ENCODE measurements at regions of chr22 and their contacts with region 1.

Region 1: DNA sequence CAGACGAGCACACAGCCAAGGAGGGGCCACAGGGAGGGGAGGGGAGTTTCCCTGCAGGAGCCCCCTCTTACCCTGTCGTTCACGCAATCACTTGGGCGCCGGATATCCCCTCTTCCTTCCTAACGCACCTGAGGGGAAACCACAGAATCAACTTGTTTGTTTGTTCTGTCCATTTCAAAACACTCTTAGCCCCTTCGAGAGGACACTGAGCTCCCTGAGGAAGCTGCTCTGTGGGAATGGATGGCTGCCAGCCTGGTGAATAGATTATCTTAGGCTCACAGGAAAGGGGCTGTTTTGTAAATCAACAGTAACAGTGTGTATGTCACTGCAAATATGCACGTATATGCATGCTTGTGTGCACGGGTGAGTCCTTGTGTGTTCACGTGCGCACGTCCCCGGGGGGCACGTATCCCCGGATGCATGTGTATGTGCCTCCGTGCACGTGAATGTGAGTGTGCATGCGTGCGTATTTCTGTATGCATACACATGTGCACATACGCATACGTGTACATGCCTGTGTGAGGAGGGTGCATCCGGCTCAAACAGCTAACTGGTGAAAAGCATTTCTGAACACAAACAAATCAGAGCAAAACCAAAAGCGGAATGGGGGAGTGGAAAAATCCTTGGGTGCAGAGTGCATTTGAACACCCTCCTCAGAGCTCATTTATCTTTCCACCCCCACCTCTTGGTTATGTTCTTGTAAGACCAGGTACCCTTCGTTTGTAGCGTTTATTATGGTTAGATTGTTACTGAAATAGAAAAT is 7.2 kb downstream of the ARSA start:
- DNase-seq: peak; percentile 80 to 97 (median 91)
- ATAC-seq: peak; percentile 72
- H3K4me3 ChIP-seq: peak overlapping the region; percentile 41 to 50
- H3K4me3 Mint-ChIP-seq: peak overlapping the region; percentile 82
- H3K27ac ChIP-seq: peak overlapping the region; percentile 91
- H3K27ac Mint-ChIP-seq: peak overlapping the region; percentile 100
- H3K4me1 ChIP-seq: peaks cover 28% of the 10 kb centered on the region
- H3K4me1 Mint-ChIP-seq: peaks cover 34% of the 10 kb centered on the region
- H3K27me3 ChIP-seq: no peaks in the 10 kb centered on the region
- H3K27me3 Mint-ChIP-seq: no peaks in the 10 kb centered on the region
- CTCF ChIP-seq: no peak

Region 2: DNA sequence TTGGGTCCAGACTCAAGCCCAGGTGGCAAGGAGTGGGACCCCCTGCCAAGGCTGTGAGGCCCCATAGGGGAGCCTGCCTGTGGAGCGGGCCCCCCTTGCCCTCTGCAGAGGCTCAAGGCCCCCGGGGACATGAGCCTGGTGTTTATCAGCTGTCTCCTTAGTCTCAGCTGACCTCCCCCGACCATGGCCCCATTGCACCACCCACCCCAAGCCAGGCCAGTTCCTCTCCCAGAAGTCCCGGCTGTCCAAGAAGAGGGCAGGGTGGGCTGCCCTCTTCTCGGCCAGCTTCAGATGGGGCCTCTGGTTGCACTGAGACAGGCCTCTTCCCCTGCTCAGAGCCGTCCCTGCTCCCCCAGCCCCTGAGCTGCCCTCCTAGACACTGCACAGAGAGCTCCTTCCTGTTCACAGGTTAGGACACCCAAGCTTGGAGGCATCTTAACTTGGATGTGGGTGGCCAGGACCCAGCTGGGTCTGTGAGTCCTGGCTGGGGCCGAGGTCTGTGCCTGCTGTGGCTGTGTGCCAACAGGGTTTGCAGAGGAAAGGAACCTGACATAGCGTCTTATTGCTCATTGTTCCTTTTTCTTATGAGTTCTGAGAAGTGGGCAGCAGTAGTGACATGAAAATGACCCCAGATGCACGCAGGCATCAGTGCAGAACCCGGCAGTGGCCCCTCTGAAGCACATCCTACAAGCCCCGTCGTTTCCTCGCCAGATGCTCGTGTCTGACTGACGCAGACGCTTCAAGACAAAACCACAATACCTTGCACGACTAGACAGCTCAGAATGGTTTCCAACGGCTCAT is 429.6 kb before region 1 on chr22:
- CTCF ChIA-PET with region 1: no interaction called
- POLR2A ChIA-PET with region 1: interaction called, 10 read pairs
- intact Hi-C with region 1: loop called in 1 of 2 experiments (anchors 1 kb)
- DNase-seq: peak; percentile 70 to 96 (median 81)
- ATAC-seq: peak; percentile 61
- H3K4me3 ChIP-seq: peak overlapping the region; percentile 81 to 94
- H3K4me3 Mint-ChIP-seq: peak overlapping the region; percentile 80
- H3K27ac ChIP-seq: peak overlapping the region; percentile 94 to 99
- H3K27ac Mint-ChIP-seq: peak overlapping the region; percentile 95
- H3K4me1 ChIP-seq: peaks cover 61% of the 10 kb centered on the region
- H3K4me1 Mint-ChIP-seq: peaks cover 47% of the 10 kb centered on the region
- H3K27me3 ChIP-seq: no peaks in the 10 kb centered on the region
- H3K27me3 Mint-ChIP-seq: no peaks in the 10 kb centered on the region
- CTCF ChIP-seq: no peak

Region 3: DNA sequence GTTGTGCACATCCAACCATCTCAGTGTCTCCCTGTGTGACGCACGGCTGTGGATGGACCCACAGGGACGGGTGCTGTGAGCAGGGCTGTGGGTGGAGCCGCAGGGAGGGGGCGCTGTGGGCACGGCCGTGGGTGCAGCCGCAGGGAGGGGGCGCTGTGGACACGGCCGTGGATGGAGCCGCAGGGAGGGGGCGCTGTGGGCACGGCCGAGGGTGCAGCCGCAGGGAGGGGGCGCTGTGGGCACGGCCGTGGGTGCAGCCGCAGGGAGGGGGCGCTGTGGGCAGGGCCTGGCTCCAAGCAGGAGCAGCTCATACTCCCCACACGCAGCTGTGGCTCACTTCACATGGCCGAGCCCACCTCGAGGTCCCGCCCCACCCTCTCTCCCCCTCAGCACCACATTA is 344.6 kb before region 1 on chr22:
- CTCF ChIA-PET with region 1: interaction called, 6 read pairs
- POLR2A ChIA-PET with region 1: interaction called, 3 read pairs
- intact Hi-C with region 1: loop called (anchors 2 to 5 kb)
- DNase-seq: peak in 4 of 9 experiments; percentile 41 to 81 (median 70)
- ATAC-seq: peak; percentile 74
- H3K4me3 ChIP-seq: no peak overlapping the region
- H3K4me3 Mint-ChIP-seq: no peak overlapping the region
- H3K27ac ChIP-seq: no peak overlapping the region
- H3K27ac Mint-ChIP-seq: no peak overlapping the region
- H3K4me1 ChIP-seq: peaks cover 10% of the 10 kb centered on the region
- H3K4me1 Mint-ChIP-seq: peaks cover 3% of the 10 kb centered on the region
- H3K27me3 ChIP-seq: no peaks in the 10 kb centered on the region
- H3K27me3 Mint-ChIP-seq: peaks cover 3% of the 10 kb centered on the region
- CTCF ChIP-seq: peak; percentile 41

Region 4: GRCh38 chr22:50474668-50475492 is 145.9 kb before region 1 on chr22 and contains the start of gene SBF1:
- CTCF ChIA-PET with region 1: interaction called, 4 read pairs
- POLR2A ChIA-PET with region 1: interaction called, 7 read pairs
- intact Hi-C with region 1: loop called (anchors 2 kb)
- DNase-seq: peak; percentile 78 to 94 (median 86)
- ATAC-seq: peak; percentile 65
- H3K4me3 ChIP-seq: peak within 1 kb of the TSS; percentile 63 to 82
- H3K4me3 Mint-ChIP-seq: peak within 1 kb of the TSS; percentile 94
- H3K27ac ChIP-seq: peak within 1 kb of the TSS; percentile 62 to 73
- H3K27ac Mint-ChIP-seq: peak within 1 kb of the TSS; percentile 96
- H3K4me1 ChIP-seq: peaks cover 46% of the 10 kb centered on the region
- H3K4me1 Mint-ChIP-seq: peaks cover 45% of the 10 kb centered on the region
- H3K27me3 ChIP-seq: no peaks in the 10 kb centered on the region
- H3K27me3 Mint-ChIP-seq: no peaks in the 10 kb centered on the region
- CTCF ChIP-seq: no peak
- total RNA-seq, gene SBF1: 209 to 215 TPM

Region 5: GRCh38 chr22:50525390-50526068 is 95.2 kb before region 1 on chr22 and contains the start of gene SCO2:
- CTCF ChIA-PET with region 1: interaction called, 25 read pairs
- POLR2A ChIA-PET with region 1: interaction called, 61 read pairs
- intact Hi-C with region 1: loop called (anchors 1 kb)
- DNase-seq: peak; percentile 94 to 99 (median 97)
- ATAC-seq: peak; percentile 76
- H3K4me3 ChIP-seq: peak within 1 kb of the TSS; percentile 69 to 92
- H3K4me3 Mint-ChIP-seq: peak within 1 kb of the TSS; percentile 88
- H3K27ac ChIP-seq: peak within 1 kb of the TSS; percentile 68 to 82
- H3K27ac Mint-ChIP-seq: peak within 1 kb of the TSS; percentile 89
- H3K4me1 ChIP-seq: peaks cover 43% of the 10 kb centered on the region
- H3K4me1 Mint-ChIP-seq: peaks cover 27% of the 10 kb centered on the region
- H3K27me3 ChIP-seq: no peaks in the 10 kb centered on the region
- H3K27me3 Mint-ChIP-seq: no peaks in the 10 kb centered on the region
- CTCF ChIP-seq: no peak
- total RNA-seq, gene SCO2: 1.5 to 4.2 TPM

Region 6: DNA sequence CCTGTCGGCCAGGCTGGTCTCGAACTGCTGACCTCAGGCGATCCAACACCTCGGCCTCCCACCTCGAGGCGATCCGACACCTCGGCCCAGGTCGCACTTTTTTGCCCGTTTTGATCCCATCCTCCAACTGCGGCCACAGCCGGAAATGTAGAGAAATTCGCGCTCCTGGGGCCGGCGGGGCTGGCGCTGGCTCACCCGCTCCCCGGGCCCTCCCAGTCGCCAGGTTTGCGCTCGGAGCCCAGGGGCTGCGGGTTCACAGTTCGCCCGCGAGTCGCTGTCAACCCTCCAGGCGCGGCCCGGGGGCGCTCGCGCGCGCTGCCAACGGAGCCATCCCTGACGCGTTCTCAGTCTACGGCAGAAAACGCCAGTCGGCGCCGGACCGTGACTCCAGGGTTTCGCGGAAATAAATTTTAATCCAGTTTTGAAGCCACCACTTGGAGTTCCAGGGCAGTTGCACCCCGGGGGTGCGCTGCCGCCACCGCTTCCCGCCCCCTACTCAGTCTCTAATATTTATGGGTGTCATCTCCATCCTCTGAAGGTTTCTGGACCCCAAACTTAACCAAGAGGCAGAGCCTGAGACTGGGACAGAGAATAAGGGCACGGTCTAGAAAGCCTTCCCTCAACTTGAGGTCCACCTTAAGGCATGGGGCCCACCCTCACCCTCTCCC is 76.6 kb before region 1 on chr22:
- CTCF ChIA-PET with region 1: interaction called, 15 read pairs
- POLR2A ChIA-PET with region 1: interaction called, 29 read pairs
- intact Hi-C with region 1: no loop called
- DNase-seq: peak; percentile 62 to 92 (median 84)
- ATAC-seq: peak; percentile 54
- H3K4me3 ChIP-seq: peak overlapping the region; percentile 43 to 48
- H3K4me3 Mint-ChIP-seq: peak overlapping the region; percentile 54
- H3K27ac ChIP-seq: peak overlapping the region; percentile 40 to 81
- H3K27ac Mint-ChIP-seq: peak overlapping the region; percentile 57
- H3K4me1 ChIP-seq: peaks cover 42% of the 10 kb centered on the region
- H3K4me1 Mint-ChIP-seq: peaks cover 45% of the 10 kb centered on the region
- H3K27me3 ChIP-seq: no peaks in the 10 kb centered on the region
- H3K27me3 Mint-ChIP-seq: no peaks in the 10 kb centered on the region
- CTCF ChIP-seq: peak; percentile 75

Region 7: GRCh38 chr22:50731811-50732624 is 111.2 kb after region 1 on chr22:
- CTCF ChIA-PET with region 1: no interaction called
- POLR2A ChIA-PET with region 1: no interaction called
- intact Hi-C with region 1: no loop called
- DNase-seq: peak; percentile 31 to 80 (median 59)
- ATAC-seq: peak; percentile 97
- H3K4me3 ChIP-seq: no peak overlapping the region
- H3K4me3 Mint-ChIP-seq: no peak overlapping the region
- H3K27ac ChIP-seq: no peak overlapping the region
- H3K27ac Mint-ChIP-seq: no peak overlapping the region
- H3K4me1 ChIP-seq: peaks cover 4% of the 10 kb centered on the region
- H3K4me1 Mint-ChIP-seq: peaks cover 3% of the 10 kb centered on the region
- H3K27me3 ChIP-seq: no peaks in the 10 kb centered on the region
- H3K27me3 Mint-ChIP-seq: no peaks in the 10 kb centered on the region
- CTCF ChIP-seq: peak; percentile 74